Activated CD4-positive, alpha-beta memory T cell treated with anti-CD3 and anti-CD28 coated beads, Interleukin-2, amount 10 ng/mL, durations not matched to agents 7 days and 5 days (primary cell): ENCODE measurements at regions of chr12 and their contacts with region 1.

Region 1: GRCh38 chr12:89225808-89226411 is 126.4 kb downstream of the DUSP6 start:
- DNase-seq: peak; percentile 30
- H3K4me3 Mint-ChIP-seq: peak overlapping the region; percentile 12
- H3K27ac Mint-ChIP-seq: peak overlapping the region; percentile 92
- H3K4me1 Mint-ChIP-seq: peaks cover 73% of the 10 kb centered on the region
- H3K27me3 Mint-ChIP-seq: no peaks in the 10 kb centered on the region

Region 2: DNA sequence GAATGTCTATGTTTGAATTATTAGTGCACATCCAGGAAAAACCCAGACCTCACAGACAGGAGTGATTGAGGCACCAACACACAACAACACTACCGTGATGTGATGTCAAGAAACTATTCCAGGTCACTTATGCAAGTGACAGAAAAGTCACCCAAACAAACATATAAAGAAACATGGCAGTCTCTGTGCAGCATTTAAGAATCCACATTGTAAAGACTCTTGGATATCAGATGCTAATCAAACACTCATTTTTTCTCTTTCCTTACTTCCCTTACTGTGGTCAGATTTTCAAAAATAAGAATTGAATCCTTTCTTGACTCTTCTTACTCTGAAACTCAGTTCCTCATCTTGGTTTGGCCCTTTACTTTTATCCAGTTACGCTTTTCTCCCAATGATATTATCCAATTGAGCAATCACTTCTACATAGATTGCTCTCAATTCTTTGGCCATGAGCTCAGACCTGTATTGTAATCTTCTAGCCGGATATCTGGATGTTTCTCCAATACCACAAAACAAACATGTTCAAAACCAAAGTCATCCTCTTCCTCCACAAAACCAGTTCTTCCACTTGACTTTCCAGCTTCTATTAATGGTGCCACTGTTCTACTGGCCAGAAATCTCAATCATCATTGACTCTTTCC is 11.0 kb after region 1 on chr12:
- CTCF ChIA-PET with region 1: interaction called, 14 read pairs
- POLR2A ChIA-PET with region 1: interaction called, 22 read pairs
- DNase-seq: no peak
- H3K4me3 Mint-ChIP-seq: no peak overlapping the region
- H3K27ac Mint-ChIP-seq: peak overlapping the region; percentile 41
- H3K4me1 Mint-ChIP-seq: peaks cover 76% of the 10 kb centered on the region
- H3K27me3 Mint-ChIP-seq: no peaks in the 10 kb centered on the region